Left ventricle myocardium superior (tissue), 1 donor: ENCODE measurements at regions of chr3 and their contacts with region 1.

Region 1: GRCh38 chr3:127697551-127698240 is 24.9 kb downstream of the ABTB1 start:
- DNase-seq: peak; percentile 90
- ATAC-seq: peak; percentile 72

Region 2: DNA sequence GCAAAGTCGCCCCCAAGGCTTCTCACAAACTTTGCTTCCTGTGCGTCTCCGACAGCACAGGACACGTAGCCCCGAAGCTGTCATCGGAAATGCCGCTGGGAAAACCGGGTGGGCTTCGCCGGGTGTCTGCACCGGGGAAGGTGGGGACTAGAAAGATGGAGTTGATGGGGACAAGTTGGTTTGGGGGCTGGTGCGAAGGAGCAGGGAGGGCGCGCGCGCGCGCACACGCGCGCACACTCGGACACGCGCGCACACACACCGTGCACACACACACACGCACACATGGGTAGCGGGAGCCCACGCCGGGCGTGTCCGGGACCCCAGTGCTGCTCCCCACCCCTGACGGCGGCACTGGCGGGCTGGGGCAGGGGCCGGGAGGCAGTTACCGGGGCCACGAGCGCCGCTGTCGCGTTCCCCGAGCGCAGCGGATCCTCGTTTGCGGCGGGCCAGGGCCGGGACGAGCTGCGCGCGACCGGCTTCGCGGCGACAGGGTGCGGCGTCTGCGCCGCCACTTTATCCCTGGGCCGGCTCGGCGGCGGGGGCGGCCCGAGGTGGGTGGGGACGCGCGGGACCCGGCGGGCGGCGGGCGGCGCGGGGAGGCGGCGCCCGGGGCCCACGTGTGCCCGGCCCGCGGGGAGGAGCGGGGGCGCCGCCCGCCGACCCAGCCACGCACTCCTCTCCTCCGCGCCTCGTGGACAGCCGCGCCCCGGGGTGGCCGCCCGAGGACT is 125.2 kb after region 1 on chr3:
- intact Hi-C with region 1: loop called (anchors 5 kb)
- DNase-seq: peak; percentile 84
- ATAC-seq: peak; percentile 85